Caco-2 (cell line): ENCODE measurements at regions of chr9 and their contacts with region 1.

Region 1: DNA sequence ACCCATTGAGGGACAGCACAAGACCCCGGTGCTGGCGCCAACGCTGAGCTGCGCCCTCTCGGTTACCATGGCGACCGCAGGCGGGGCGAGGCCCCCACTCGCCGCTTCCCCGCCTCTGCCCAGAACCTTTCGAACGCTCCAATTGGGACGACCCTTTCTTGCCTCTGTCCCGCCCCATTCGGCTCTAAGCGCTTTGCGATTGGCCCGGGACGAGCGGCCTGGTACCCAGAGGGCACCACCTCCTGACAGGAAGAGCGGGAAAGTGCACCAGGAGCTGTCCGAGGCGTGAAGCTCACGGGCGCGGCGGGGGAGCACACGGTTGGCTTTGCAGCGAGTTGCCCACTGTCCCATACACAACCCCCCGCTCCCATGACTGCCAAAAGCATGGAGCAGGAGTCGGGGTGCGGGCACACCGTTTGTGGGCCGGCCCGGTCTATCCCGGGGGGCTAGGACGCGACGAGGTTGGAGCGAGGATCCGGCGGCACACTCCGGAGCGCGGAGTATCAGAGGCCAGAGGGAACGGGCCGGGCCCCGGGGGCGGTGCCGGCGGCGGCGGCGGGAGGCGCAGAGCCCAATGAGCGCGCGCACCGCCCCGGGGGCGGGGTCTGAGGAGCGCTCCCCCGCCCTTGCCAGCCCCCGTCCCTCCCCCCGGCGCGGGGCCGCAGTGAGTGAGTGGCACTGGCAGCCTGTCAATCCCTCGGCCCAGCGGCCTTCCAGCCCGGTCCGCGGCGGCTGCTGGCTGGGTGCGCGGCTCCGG is 978 bp upstream of the PBX3 start:
- DNase-seq: peak; percentile 97 to 98
- H3K4me3 ChIP-seq: peak overlapping the region; percentile 88
- H3K4me3 Mint-ChIP-seq: peak overlapping the region; percentile 93
- H3K27ac Mint-ChIP-seq: peak overlapping the region; percentile 79
- H3K4me1 ChIP-seq: peaks cover 16% of the 10 kb centered on the region
- H3K4me1 Mint-ChIP-seq: peaks cover 32% of the 10 kb centered on the region
- H3K27me3 ChIP-seq: no peaks in the 10 kb centered on the region
- H3K27me3 Mint-ChIP-seq: peaks cover 7% of the 10 kb centered on the region
- CTCF ChIP-seq: no peak

Region 2: GRCh38 chr9:125694478-125694877 is 51.7 kb before region 1 on chr9:
- CTCF ChIA-PET with region 1: no interaction called
- POLR2A ChIA-PET with region 1: no interaction called
- intact Hi-C with region 1: no loop called
- DNase-seq: no peak
- H3K4me3 ChIP-seq: no peak overlapping the region
- H3K4me3 Mint-ChIP-seq: no peak overlapping the region
- H3K27ac Mint-ChIP-seq: no peak overlapping the region
- H3K4me1 ChIP-seq: no peaks in the 10 kb centered on the region; the same call in 1 of the 2 replicates
- H3K4me1 Mint-ChIP-seq: no peaks in the 10 kb centered on the region
- H3K27me3 ChIP-seq: no peaks in the 10 kb centered on the region
- H3K27me3 Mint-ChIP-seq: no peaks in the 10 kb centered on the region
- CTCF ChIP-seq: no peak

Region 3: GRCh38 chr9:125706661-125707471 is 39.3 kb before region 1 on chr9 and contains the start of gene MAPKAP1:
- CTCF ChIA-PET with region 1: no interaction called
- POLR2A ChIA-PET with region 1: interaction called, 9 read pairs
- intact Hi-C with region 1: loop called (anchors 1 kb)
- DNase-seq: peak; percentile 97 to 98
- H3K4me3 ChIP-seq: peak within 1 kb of the TSS; percentile 87
- H3K4me3 Mint-ChIP-seq: peak within 1 kb of the TSS; percentile 60
- H3K27ac Mint-ChIP-seq: peak within 1 kb of the TSS; percentile 60
- H3K4me1 ChIP-seq: peaks cover 8% of the 10 kb centered on the region; the same call in 1 of the 2 replicates
- H3K4me1 Mint-ChIP-seq: peaks cover 8% of the 10 kb centered on the region
- H3K27me3 ChIP-seq: no peaks in the 10 kb centered on the region
- H3K27me3 Mint-ChIP-seq: no peaks in the 10 kb centered on the region
- CTCF ChIP-seq: no peak
- total RNA-seq, gene MAPKAP1: 70.0 and 82.5 TPM in 2 replicates

Region 4: DNA sequence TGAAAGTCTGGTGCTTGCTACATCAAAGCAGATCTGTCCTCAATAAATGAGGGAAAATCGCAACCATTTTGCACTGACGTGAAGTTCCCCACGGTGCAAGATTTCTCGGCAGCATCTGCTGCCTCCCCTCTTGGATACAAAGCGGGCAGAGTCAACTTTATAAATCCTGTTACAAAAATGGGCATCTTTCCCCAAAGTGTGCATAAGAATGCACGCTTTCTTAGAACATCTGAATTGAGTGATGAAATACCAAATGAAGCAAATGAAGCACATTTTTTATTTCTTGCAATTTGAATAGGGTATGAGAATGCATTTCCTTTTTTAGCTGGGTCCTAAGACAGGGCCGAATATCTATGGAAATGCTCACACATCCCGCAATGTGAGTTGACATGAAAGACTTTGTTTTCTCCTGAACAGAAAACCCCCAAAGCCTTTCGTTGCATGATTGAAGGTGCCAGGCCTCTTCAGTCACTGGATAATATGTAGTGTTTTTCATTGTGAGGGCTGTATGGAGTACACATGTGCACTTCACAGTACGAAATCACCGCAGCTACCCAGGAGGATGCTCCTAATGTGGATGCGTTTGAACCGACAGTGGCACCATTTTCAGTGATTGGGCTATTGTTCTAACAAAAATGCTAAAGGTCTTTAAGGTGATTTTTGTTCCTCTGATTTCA is 19.6 kb before region 1 on chr9:
- CTCF ChIA-PET with region 1: no interaction called
- POLR2A ChIA-PET with region 1: interaction called, 11 read pairs
- intact Hi-C with region 1: no loop called
- DNase-seq: no peak
- H3K4me3 ChIP-seq: no peak overlapping the region
- H3K4me3 Mint-ChIP-seq: no peak overlapping the region
- H3K27ac Mint-ChIP-seq: no peak overlapping the region
- H3K4me1 ChIP-seq: no peaks in the 10 kb centered on the region
- H3K4me1 Mint-ChIP-seq: no peaks in the 10 kb centered on the region
- H3K27me3 ChIP-seq: no peaks in the 10 kb centered on the region
- H3K27me3 Mint-ChIP-seq: peaks cover 6% of the 10 kb centered on the region
- CTCF ChIP-seq: no peak